ENCODE measurements at regions of chr2 and their contacts with region 1.

Region 1: GRCh38 chr2:231557571-231558237 is 27.5 kb upstream of the NMUR1 start:
- DNase-seq: no peak
- ATAC-seq: peak; percentile 94
- H3K4me3 Mint-ChIP-seq: no peak overlapping the region
- H3K27ac Mint-ChIP-seq: no peak overlapping the region
- H3K4me1 Mint-ChIP-seq: peaks cover 20% of the 10 kb centered on the region
- H3K27me3 Mint-ChIP-seq: peaks cover 2% of the 10 kb centered on the region
- CTCF ChIP-seq: peak; percentile 27

Region 2: GRCh38 chr2:231104115-231104713 is 453.5 kb before region 1 on chr2:
- CTCF ChIA-PET with region 1: no interaction called
- POLR2A ChIA-PET with region 1: no interaction called
- intact Hi-C with region 1: loop called (anchors 2 kb)
- DNase-seq: peak; percentile 34
- ATAC-seq: peak; percentile 91
- H3K4me3 Mint-ChIP-seq: no peak overlapping the region
- H3K27ac Mint-ChIP-seq: no peak overlapping the region
- H3K4me1 Mint-ChIP-seq: peaks cover 3% of the 10 kb centered on the region
- H3K27me3 Mint-ChIP-seq: no peaks in the 10 kb centered on the region
- CTCF ChIP-seq: no peak

Region 3: GRCh38 chr2:231227309-231228162 is 330.2 kb before region 1 on chr2:
- CTCF ChIA-PET with region 1: no interaction called
- POLR2A ChIA-PET with region 1: no interaction called
- intact Hi-C with region 1: loop called (anchors 5 kb)
- DNase-seq: no peak
- ATAC-seq: peak; percentile 89
- H3K4me3 Mint-ChIP-seq: no peak overlapping the region
- H3K27ac Mint-ChIP-seq: no peak overlapping the region
- H3K4me1 Mint-ChIP-seq: peaks cover 24% of the 10 kb centered on the region
- H3K27me3 Mint-ChIP-seq: no peaks in the 10 kb centered on the region
- CTCF ChIP-seq: peak; percentile 23

Region 4: GRCh38 chr2:231482806-231483391 is 74.8 kb before region 1 on chr2:
- CTCF ChIA-PET with region 1: interaction called, 37 read pairs
- POLR2A ChIA-PET with region 1: no interaction called
- intact Hi-C with region 1: loop called (anchors 1 kb)
- DNase-seq: peak; percentile 77
- ATAC-seq: peak; percentile 85
- H3K4me3 Mint-ChIP-seq: peak overlapping the region; percentile 80
- H3K27ac Mint-ChIP-seq: peak overlapping the region; percentile 82
- H3K4me1 Mint-ChIP-seq: peaks cover 9% of the 10 kb centered on the region
- H3K27me3 Mint-ChIP-seq: no peaks in the 10 kb centered on the region
- CTCF ChIP-seq: peak; percentile 29

Region 5: GRCh38 chr2:231514103-231514950 is 43.4 kb before region 1 on chr2:
- CTCF ChIA-PET with region 1: interaction called, 19 read pairs
- POLR2A ChIA-PET with region 1: interaction called, 4 read pairs
- intact Hi-C with region 1: loop called (anchors 1 kb)
- DNase-seq: peak; percentile 97
- ATAC-seq: peak; percentile 99
- H3K4me3 Mint-ChIP-seq: peak overlapping the region; percentile 92
- H3K27ac Mint-ChIP-seq: peak overlapping the region; percentile 96
- H3K4me1 Mint-ChIP-seq: peaks cover 13% of the 10 kb centered on the region
- H3K27me3 Mint-ChIP-seq: no peaks in the 10 kb centered on the region
- CTCF ChIP-seq: no peak

Region 6: DNA sequence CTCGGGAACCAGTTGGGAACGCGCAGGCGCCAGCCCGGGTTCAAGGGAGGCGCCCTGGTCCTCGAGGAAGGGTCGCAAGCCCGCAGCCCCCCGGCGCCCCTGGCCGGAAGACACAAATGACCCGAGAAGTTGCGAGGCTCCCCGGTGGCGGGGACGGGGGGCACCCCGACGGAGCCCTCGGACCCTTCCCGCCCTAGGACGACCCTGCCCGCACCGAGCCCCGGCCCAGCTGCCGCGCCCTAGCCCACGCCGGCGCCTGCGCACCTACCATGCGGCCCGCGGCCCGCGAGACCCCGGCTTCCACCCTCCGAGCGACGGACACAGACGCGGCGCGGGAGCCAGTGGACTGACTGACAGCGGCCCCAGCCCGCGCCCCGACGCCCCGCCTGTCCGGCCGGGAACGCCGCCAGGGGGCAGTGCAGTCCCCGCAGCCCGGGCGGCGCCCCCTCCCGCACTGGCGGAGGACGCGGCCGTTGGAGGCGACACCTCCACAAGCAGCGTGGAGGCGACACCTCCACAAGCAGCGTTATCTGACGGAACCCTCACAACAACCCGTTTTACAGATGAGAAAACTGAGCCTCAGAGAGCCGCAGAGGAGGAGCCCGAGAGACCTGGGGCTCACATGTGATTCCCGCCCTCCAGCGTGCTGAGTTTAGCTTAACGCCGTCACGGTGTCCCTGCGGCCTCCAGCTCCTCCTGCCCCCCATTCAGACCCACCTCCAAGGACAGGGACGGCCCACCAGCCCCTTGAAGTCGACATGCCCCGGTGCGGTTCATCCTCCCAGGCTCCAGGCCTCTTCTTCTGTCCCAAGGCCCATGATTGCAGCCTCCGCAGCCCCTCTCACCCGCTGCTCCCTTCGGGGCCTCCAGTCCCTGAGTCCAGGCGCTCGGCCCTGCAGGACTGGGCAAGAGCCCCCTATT is 27.4 kb before region 1 on chr2 and contains the start of gene NMUR1:
- CTCF ChIA-PET with region 1: interaction called, 28 read pairs
- POLR2A ChIA-PET with region 1: no interaction called
- intact Hi-C with region 1: loop called (anchors 1 kb)
- DNase-seq: peak; percentile 81
- ATAC-seq: peak; percentile 97
- H3K4me3 Mint-ChIP-seq: peak within 1 kb of the TSS; percentile 35
- H3K27ac Mint-ChIP-seq: no peak within 1 kb of the TSS
- H3K4me1 Mint-ChIP-seq: peaks cover 11% of the 10 kb centered on the region
- H3K27me3 Mint-ChIP-seq: peaks cover 27% of the 10 kb centered on the region
- CTCF ChIP-seq: peak; percentile 66
- total RNA-seq, gene NMUR1: not detected in 2 replicates

Region 7: DNA sequence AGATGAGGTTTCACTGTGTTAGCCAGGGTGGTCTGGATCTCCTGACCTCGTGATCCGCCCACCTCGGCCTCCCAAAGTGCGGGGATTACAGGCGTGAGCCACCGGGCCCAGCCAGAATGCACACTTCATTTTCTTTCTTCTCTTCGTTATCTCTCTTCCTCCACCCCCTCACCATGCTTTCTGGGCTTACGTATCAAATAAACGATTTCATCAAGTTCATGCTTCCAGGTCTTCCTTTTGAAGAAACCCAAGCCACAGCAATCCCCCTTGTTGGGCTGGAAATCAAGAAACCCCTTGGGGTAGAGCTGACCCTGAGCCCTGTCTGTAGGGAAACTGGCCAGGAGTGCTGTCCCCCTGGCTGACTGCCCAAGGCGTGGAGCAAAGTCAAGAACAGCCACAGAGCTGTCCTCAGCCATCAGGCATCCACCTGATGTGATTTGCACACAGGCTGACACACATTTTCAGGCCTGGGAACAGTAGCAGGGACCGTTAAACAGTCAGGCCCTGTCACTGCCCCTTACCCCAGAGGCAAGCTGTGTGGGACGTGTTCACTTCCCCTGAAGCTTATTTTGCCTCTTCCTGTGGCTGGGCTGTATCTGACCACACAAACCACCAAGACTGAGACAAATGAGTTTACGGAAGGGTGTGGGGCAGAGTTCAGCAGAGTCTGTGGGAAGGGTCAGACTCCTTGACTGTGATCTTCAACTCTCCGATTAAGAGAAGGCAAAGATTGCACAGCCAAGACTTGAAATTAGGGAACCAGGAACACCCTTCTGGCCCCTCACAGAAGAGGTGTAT is 12.4 kb before region 1 on chr2:
- CTCF ChIA-PET with region 1: interaction called, 5 read pairs
- POLR2A ChIA-PET with region 1: no interaction called
- intact Hi-C with region 1: loop called (anchors 1 kb)
- DNase-seq: peak; percentile 36
- ATAC-seq: peak; percentile 95
- H3K4me3 Mint-ChIP-seq: peak overlapping the region; percentile 74
- H3K27ac Mint-ChIP-seq: peak overlapping the region; percentile 44
- H3K4me1 Mint-ChIP-seq: peaks cover 32% of the 10 kb centered on the region
- H3K27me3 Mint-ChIP-seq: no peaks in the 10 kb centered on the region
- CTCF ChIP-seq: no peak

Measured in activated B cell treated with CpG ODN at 0.5 μM for 24 hours (primary cell).